ENCODE measurements at regions of chr16 and their contacts with region 1.

Region 1: GRCh38 chr16:83952940-83953795 is at the start of gene OSGIN1:
- DNase-seq: peak; percentile 94
- ATAC-seq: peak; percentile 95
- H3K4me3 Mint-ChIP-seq: peak within 1 kb of the TSS; percentile 66
- H3K27ac Mint-ChIP-seq: peak within 1 kb of the TSS; percentile 55
- H3K4me1 Mint-ChIP-seq: peaks cover 19% of the 10 kb centered on the region
- H3K27me3 Mint-ChIP-seq: peaks cover 16% of the 10 kb centered on the region
- total RNA-seq, gene OSGIN1: 0.75 to 1.0 TPM

Region 2: GRCh38 chr16:83826146-83826913 is 126.8 kb before region 1 on chr16:
- CTCF ChIA-PET with region 1: no interaction called
- POLR2A ChIA-PET with region 1: no interaction called
- intact Hi-C with region 1: loop called in 1 of 2 experiments (anchors 2 kb)
- DNase-seq: peak; percentile 89
- ATAC-seq: peak; percentile 97
- H3K4me3 Mint-ChIP-seq: no peak overlapping the region
- H3K27ac Mint-ChIP-seq: no peak overlapping the region
- H3K4me1 Mint-ChIP-seq: peaks cover 4% of the 10 kb centered on the region
- H3K27me3 Mint-ChIP-seq: peaks cover 2% of the 10 kb centered on the region

Region 3: GRCh38 chr16:84013787-84014569 is 60.8 kb after region 1 on chr16:
- CTCF ChIA-PET with region 1: interaction called, 10 read pairs
- POLR2A ChIA-PET with region 1: no interaction called
- intact Hi-C with region 1: loop called in 1 of 2 experiments (anchors 1 kb)
- DNase-seq: peak; percentile 91
- ATAC-seq: peak; percentile 90
- H3K4me3 Mint-ChIP-seq: no peak overlapping the region
- H3K27ac Mint-ChIP-seq: no peak overlapping the region
- H3K4me1 Mint-ChIP-seq: peaks cover 9% of the 10 kb centered on the region
- H3K27me3 Mint-ChIP-seq: no peaks in the 10 kb centered on the region

Region 4: DNA sequence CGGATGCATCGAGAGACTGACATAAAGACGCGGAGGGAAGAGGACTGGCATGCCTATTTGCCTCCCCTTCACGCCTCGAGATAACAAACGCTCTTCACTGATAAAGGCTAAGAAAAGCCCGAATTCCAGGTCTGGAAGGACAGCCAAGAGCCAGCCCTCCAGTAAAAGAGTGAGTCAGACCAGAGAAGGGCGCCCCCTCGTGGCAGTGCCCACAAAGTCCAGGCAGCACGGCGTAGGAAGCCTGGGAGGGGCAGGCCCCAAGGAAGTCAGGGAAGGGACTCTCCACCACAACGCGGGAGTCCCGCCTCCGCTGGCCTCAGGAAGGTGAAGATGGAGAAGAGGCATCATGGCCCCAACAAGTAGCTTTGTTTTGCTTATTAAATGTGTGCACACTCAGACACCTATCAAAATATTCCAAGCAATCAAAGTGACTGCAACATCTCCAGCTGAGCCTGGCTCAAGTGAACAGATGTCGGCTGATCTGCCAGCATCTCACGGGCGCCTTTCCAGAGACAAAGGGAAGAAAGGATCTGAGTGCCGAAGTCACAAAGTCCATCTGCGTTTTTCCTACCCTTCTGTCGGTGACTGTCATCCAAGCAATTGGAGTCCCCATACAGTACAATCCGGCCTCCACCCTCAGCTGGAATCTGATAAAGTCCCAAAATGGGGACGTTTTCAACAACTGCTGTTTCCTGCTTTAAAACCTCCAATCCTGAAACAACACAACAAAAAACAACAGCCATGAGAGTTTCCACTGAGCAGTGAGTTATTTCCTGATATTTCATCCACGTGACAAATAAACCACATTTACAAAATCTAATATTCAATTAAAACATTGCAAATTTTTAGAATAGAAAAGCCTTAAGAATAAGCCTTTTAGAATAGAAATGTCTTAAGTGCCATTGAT is 109.8 kb after region 1 on chr16:
- CTCF ChIA-PET with region 1: interaction called, 30 read pairs
- POLR2A ChIA-PET with region 1: no interaction called
- intact Hi-C with region 1: loop called (anchors 1 kb)
- DNase-seq: peak; percentile 85
- ATAC-seq: peak; percentile 94
- H3K4me3 Mint-ChIP-seq: no peak overlapping the region
- H3K27ac Mint-ChIP-seq: no peak overlapping the region
- H3K4me1 Mint-ChIP-seq: no peaks in the 10 kb centered on the region
- H3K27me3 Mint-ChIP-seq: no peaks in the 10 kb centered on the region

Region 5: DNA sequence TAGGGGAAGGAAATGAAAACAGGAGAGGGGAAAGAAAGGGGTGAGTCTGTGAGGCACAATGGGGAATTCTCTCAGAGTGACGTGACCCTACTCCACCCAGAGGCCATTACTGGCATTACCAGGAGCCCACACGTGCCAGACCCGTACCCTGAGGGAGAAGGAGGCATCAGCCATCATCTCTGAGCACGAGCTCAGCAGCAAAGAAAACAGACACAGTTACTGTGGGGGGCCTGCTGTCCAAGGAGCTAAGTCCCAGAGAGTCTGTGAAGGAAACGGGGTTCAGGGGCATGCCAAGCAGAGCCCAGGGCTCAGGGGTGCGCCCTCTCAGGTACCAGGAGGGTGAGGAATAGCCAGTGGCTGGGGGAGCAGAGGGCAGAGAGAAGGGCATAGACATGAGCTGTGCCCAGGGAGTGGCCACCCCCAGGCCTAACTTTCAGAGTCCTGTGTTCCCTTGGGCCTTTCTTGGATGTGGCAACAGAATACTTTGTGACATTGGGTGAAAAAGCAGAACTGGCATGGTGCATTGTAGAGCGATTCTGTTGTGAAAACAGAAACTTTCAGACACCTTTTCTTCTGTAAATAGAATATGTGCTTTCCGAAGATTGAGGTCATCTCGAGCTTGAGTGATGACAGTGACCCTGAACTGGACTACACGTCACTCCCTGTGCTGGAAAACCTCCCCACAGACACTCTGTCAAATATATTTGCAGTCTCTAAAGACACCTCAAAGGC is 222.3 kb after region 1 on chr16:
- CTCF ChIA-PET with region 1: interaction called, 5 read pairs
- POLR2A ChIA-PET with region 1: no interaction called
- intact Hi-C with region 1: loop called in 1 of 2 experiments (anchors 1 kb)
- DNase-seq: peak; percentile 81
- ATAC-seq: peak; percentile 93
- H3K4me3 Mint-ChIP-seq: no peak overlapping the region
- H3K27ac Mint-ChIP-seq: no peak overlapping the region
- H3K4me1 Mint-ChIP-seq: peaks cover 19% of the 10 kb centered on the region
- H3K27me3 Mint-ChIP-seq: peaks cover 2% of the 10 kb centered on the region

Measured in activated CD4-positive, alpha-beta T cell treated with anti-CD3 and anti-CD28 coated beads for 36 hours (primary cell).